CD4-positive, alpha-beta memory T cell (primary cell): ENCODE measurements at regions of chr12 and their contacts with region 1.

Region 1: GRCh38 chr12:1605129-1606020 is 11.0 kb upstream of the FBXL14 start:
- DNase-seq: peak; percentile 65 to 73 (median 70)
- H3K4me3 ChIP-seq: peak overlapping the region in 1 of 2 donors; percentile 49
- H3K4me3 Mint-ChIP-seq: peak overlapping the region; percentile 82 to 92 (median 86)
- H3K27ac ChIP-seq: no peak overlapping the region
- H3K27ac Mint-ChIP-seq: peak overlapping the region in 5 of 7 donors; percentile 51 to 87 (median 66)
- H3K4me1 ChIP-seq: peaks cover 27% of the 10 kb centered on the region
- H3K4me1 Mint-ChIP-seq: peaks cover 17 to 41% (median 28%) of the 10 kb centered on the region in 4 donors
- H3K27me3 ChIP-seq: no peaks in the 10 kb centered on the region
- H3K27me3 Mint-ChIP-seq: no peaks in the 10 kb centered on the region

Region 2: DNA sequence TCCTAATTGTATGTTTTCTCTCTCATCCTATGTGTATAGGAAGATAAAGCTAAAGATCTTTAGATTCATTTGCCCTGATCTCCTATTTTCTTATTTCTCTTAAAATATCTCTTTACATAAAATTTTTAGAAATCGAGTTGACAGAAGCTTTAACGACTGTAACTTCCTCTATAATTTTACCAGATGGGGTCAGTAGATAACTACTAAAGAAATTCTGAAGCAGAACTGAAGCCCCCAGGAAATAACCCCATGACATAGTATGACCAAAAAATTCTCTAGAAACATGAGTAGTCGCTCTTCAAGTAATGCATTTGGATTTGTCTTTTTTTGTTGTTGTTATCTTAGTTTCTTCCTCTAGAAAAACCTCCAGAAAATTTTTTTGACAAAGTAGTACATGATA is 326.3 kb before region 1 on chr12:
- CTCF ChIA-PET with region 1: no interaction called
- POLR2A ChIA-PET with region 1: no interaction called
- intact Hi-C with region 1: loop called (anchors 10 kb)
- DNase-seq: no peak
- H3K4me3 ChIP-seq: no peak overlapping the region
- H3K4me3 Mint-ChIP-seq: no peak overlapping the region
- H3K27ac ChIP-seq: no peak overlapping the region
- H3K27ac Mint-ChIP-seq: no peak overlapping the region
- H3K4me1 ChIP-seq: no peaks in the 10 kb centered on the region
- H3K4me1 Mint-ChIP-seq: peaks cover 0 to 8% (median 6%) of the 10 kb centered on the region in 4 donors
- H3K27me3 ChIP-seq: no peaks in the 10 kb centered on the region
- H3K27me3 Mint-ChIP-seq: no peaks in the 10 kb centered on the region

Region 3: DNA sequence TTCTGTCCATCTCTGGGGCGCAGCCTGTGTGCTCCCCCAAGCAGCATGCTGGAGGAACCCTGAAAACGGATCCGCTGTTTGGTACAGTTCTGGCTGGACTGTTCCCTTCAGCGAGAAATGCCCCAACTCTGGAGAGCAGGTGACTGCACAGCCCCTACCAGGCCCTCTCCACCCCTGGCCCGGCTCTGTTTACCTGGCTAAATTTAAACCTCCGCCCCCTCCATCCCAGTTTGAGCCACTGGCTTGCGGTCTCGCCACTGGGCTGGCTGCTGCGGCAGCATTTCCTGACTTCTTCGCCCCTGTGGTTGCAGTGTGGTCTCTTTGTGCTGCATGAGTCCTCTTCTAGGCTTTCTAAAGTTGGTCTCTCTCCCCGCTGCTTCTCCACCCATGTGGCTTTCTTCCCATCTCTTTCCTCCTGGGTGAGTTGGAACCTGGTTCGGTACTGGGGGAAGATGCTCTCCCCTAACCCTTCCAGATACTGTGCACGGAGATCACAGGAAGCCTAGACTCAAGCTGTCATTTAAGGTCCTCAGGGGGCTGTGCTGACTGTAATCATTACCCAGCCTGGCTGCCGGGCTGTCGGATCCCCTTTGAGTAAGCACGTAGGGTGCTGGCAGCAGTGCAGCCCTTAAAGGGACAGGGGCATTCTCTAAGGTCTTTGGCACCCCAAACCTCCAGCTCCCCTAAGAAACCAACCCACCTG is 71.6 kb before region 1 on chr12:
- CTCF ChIA-PET with region 1: no interaction called
- POLR2A ChIA-PET with region 1: no interaction called
- intact Hi-C with region 1: loop called (anchors 5 kb)
- DNase-seq: peak; percentile 30 to 45 (median 41)
- H3K4me3 ChIP-seq: peak overlapping the region in 1 of 2 donors; percentile 18
- H3K4me3 Mint-ChIP-seq: peak overlapping the region; percentile 81 to 91 (median 86)
- H3K27ac ChIP-seq: no peak overlapping the region
- H3K27ac Mint-ChIP-seq: peak overlapping the region in 3 of 7 donors; percentile 2 to 58 (median 23)
- H3K4me1 ChIP-seq: peaks cover 37% of the 10 kb centered on the region
- H3K4me1 Mint-ChIP-seq: peaks cover 22 to 34% (median 26%) of the 10 kb centered on the region in 4 donors
- H3K27me3 ChIP-seq: peaks cover 41% of the 10 kb centered on the region
- H3K27me3 Mint-ChIP-seq: peaks cover 44 to 54% of the 10 kb centered on the region in 2 donors

Region 4: DNA sequence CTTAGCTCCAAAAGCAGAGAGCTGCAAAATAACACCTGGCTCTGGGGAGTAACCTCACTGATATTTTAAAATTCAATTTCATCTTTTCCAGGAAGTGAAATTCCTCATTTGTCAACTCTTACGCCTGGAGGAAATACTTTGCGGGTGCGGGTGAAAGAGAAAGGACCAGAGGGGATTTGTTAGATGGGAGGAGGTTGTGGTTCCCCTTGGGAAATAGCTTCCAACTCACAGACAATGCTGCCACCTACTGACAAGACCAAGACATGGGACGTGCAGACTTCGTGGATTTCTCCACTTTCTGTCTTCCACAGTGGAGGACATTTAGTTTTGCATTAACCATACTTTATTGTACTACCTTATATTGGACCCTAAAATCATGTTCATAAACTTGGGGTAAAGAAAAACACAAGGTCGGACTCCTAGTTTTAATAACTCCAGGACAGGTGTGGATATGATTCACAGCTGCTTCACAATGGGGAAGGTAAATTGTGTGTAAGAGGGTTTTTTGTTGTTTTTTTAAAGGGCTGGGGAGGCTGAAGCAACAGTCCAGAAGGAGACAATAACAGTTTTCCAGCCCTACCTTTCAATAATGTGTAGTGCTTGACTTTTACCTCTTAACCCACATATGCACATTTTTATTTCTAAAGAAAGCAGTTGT is 21.8 kb before region 1 on chr12:
- CTCF ChIA-PET with region 1: interaction called, 43 read pairs
- POLR2A ChIA-PET with region 1: interaction called, 142 read pairs
- intact Hi-C with region 1: loop called (anchors 1 kb)
- DNase-seq: peak; percentile 60 to 68 (median 67)
- H3K4me3 ChIP-seq: no peak overlapping the region
- H3K4me3 Mint-ChIP-seq: peak overlapping the region in 2 of 8 donors; percentile 45 to 51
- H3K27ac ChIP-seq: no peak overlapping the region
- H3K27ac Mint-ChIP-seq: peak overlapping the region in 5 of 7 donors; percentile 35 to 81 (median 72)
- H3K4me1 ChIP-seq: peaks cover 21% of the 10 kb centered on the region
- H3K4me1 Mint-ChIP-seq: peaks cover 14 to 22% (median 19%) of the 10 kb centered on the region in 4 donors
- H3K27me3 ChIP-seq: no peaks in the 10 kb centered on the region
- H3K27me3 Mint-ChIP-seq: no peaks in the 10 kb centered on the region